A549 (cell line): ENCODE measurements at regions of chr13 and their contacts with region 1.

Region 1: GRCh38 chr13:110915057-110915873 is at the start of gene ANKRD10:
- DNase-seq: peak; percentile 83 to 95
- ATAC-seq: peak; percentile 84 to 90
- H3K4me3 ChIP-seq: peak within 1 kb of the TSS; percentile 99
- H3K27ac ChIP-seq: peak within 1 kb of the TSS; percentile 100
- H3K4me1 ChIP-seq: peaks cover 16% of the 10 kb centered on the region
- CTCF ChIP-seq: peak; percentile 62
- EP300 ChIP-seq: no peak
- POLR2A ChIP-seq: no peak
- RAD21 ChIP-seq: peak; percentile 50 to 52; a peak in 4 of 5 replicates
- polyA plus RNA-seq, gene ANKRD10: 60.2 and 66.0 TPM in 2 replicates

Region 2: DNA sequence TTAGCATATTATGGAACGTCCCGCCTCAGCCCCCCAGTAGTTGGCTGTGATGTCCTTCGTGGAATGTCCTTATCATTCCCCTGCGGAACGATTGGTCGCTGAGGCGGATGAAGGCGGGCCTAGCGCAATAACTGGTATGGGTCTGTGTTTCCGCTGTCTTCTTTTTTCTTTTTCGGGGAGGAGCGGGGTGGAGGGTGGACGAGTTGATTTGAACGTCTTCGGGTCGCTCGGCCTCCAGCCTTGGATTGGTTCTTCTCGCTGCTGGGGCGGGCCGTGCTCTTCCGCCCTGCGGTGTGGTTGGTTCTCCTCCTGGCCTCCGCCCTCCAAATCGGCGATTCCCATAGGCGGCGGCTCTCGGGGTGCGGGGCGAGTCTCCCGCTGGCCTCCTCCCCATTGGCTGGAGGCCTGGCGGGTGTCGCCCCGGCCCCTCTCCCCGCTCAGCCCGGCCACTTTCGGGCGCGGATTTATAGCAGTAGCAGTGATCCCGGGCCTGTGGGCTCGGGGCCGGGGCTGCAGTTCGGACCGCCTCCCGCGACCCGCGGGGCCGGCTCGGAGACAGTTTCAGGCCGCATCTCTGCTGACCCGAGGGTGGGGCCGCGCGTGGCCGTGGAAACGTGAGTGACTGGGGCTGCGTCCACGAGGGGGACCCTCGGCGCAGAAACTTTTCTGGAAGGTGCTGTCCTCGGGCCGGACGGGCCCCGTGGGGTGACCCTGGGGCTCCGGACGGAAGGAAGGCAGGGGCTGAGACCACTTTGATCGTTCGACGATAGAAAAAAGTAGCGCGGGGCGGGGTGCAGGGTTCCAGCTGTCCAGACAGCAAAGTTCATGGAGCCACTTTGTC is 199.7 kb before region 1 on chr13:
- CTCF ChIA-PET with region 1: no interaction called
- POLR2A ChIA-PET with region 1: interaction called, 13 read pairs
- DNase-seq: peak; percentile 82 to 98
- ATAC-seq: peak; percentile 70 to 86
- H3K4me3 ChIP-seq: peak overlapping the region; percentile 93
- H3K27ac ChIP-seq: peak overlapping the region; percentile 73 to 87
- H3K4me1 ChIP-seq: peaks cover 18% of the 10 kb centered on the region; the same call in 2 of the 3 replicates
- CTCF ChIP-seq: no peak
- EP300 ChIP-seq: no peak
- POLR2A ChIP-seq: peak; percentile 74
- RAD21 ChIP-seq: no peak

Region 3: GRCh38 chr13:110894097-110894496 is 21.2 kb before region 1 on chr13:
- CTCF ChIA-PET with region 1: no interaction called
- POLR2A ChIA-PET with region 1: no interaction called
- DNase-seq: no peak
- ATAC-seq: no peak
- H3K4me3 ChIP-seq: no peak overlapping the region
- H3K27ac ChIP-seq: no peak overlapping the region
- H3K4me1 ChIP-seq: no peaks in the 10 kb centered on the region
- CTCF ChIP-seq: no peak
- EP300 ChIP-seq: no peak
- POLR2A ChIP-seq: no peak
- RAD21 ChIP-seq: no peak

Region 4: DNA sequence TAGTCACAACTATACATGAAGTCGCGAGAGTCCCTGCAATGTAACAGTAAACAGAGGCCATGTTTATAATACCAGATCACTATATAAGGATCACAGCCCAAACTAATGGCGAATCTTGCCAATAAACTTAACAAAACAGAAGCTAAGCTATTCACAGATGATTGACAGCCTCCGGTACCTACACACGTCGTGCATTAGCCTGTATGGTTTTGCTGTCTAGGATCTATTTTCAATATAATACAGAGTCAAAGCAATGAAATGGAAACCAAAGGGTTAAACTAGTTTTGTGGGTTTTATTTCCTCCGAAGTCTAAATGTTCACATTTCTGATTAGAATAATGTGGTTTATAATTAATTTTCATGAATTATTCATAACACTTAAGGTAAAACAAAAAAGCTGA is 10.5 kb before region 1 on chr13:
- CTCF ChIA-PET with region 1: interaction called, 11 read pairs
- POLR2A ChIA-PET with region 1: interaction called, 5 read pairs
- DNase-seq: no peak
- ATAC-seq: no peak
- H3K4me3 ChIP-seq: no peak overlapping the region
- H3K27ac ChIP-seq: no peak overlapping the region
- H3K4me1 ChIP-seq: peaks cover 26% of the 10 kb centered on the region
- CTCF ChIP-seq: no peak
- EP300 ChIP-seq: no peak
- POLR2A ChIP-seq: no peak
- RAD21 ChIP-seq: no peak

Region 5: GRCh38 chr13:111049802-111050538 is 134.7 kb after region 1 on chr13:
- CTCF ChIA-PET with region 1: interaction called, 11 read pairs
- POLR2A ChIA-PET with region 1: no interaction called
- DNase-seq: no peak
- ATAC-seq: peak in 1 of 2 experiments; percentile 70; a peak in 3 of 6 replicates
- H3K4me3 ChIP-seq: no peak overlapping the region
- H3K27ac ChIP-seq: no peak overlapping the region
- H3K4me1 ChIP-seq: no peaks in the 10 kb centered on the region
- CTCF ChIP-seq: peak; percentile 62
- EP300 ChIP-seq: no peak
- POLR2A ChIP-seq: no peak
- RAD21 ChIP-seq: peak; percentile 71 to 75